ENCODE measurements at regions of chr13 and their contacts with region 1.

Region 1: DNA sequence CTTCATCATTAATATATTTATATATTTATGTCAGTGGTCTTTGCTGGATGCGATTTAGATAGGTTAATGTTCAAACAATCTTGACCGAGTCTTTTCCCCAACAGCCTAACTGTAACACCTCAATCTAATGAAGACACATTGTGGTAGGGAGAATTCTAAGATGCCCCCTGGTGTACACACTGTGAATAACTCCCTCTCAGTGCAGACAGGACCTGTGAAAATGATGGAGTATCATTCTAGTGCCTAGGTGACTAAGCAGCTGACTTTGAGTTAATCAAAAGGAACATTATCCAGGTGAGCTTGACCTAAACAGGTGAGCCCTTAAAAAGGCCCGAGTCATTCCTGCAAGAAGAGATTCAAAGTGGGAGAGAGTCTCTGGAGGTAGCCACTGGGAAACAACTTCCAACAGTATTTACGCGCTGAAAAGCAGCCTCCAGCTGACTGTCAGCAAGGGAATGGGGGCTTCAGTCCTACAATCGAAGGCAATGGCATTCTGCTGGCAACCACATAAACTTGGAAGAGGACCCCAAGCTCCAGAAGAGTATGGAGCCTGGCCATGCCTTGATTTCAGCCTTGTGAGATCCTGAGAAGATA is 28.0 kb upstream of the KBTBD7 start:
- DNase-seq: peak in 2 of 4 donors; percentile 7 to 43
- ATAC-seq: peak; percentile 97
- H3K4me3 ChIP-seq: no peak overlapping the region
- H3K27ac ChIP-seq: peak overlapping the region in 1 of 2 donors; percentile 51
- H3K4me1 ChIP-seq: no peaks in the 10 kb centered on the region
- H3K27me3 ChIP-seq: no peaks in the 10 kb centered on the region
- CTCF ChIP-seq: peak; percentile 74 to 79

Region 2: DNA sequence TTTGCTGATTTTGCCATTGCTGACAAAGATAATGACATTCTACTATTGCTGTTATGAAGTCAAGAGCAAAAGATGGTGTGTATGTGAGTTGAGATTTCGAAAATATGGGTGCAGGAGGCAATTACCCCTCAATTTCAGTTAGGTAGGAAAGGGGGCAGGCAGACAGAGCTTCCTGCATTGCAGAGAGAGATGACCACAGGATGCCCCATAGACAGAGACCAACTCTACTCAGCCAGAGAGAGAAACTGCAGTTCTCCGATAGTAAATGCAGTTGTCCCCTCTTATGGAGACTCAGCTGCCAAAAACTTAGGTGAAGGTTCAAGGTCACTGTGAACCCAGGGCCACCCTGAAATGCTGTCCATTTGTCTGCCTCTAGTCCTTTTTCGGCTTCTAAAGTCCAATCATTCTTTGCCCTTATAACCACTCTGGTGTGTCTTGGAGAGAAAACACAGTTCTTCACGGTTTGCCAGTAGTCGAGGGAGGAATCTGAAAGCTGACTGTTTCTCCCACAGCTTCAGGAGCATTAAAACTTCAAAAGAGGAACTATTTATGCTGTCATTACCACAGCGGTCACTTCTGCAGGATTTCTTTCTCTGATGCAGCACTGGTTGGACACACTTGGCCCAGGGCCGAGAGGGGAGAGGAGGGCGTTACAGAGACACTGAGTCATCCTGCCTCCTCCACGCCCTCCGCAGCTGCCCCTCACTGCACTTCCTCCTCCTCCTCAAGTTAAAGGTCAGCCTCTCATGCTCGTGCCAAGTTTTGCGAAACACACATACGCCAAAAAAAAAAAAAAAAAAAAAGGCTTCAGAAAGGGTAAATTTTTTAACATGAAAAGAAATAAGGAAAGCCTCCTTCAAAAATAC is 820.2 kb before region 1 on chr13:
- intact Hi-C with region 1: no loop called
- DNase-seq: peak; percentile 75 to 97 (median 92)
- ATAC-seq: peak; percentile 97
- H3K4me3 ChIP-seq: no peak overlapping the region
- H3K27ac ChIP-seq: peak overlapping the region; percentile 58 to 82
- H3K4me1 ChIP-seq: peaks cover 21 to 55% of the 10 kb centered on the region in 2 donors
- H3K27me3 ChIP-seq: no peaks in the 10 kb centered on the region
- CTCF ChIP-seq: no peak

Region 3: GRCh38 chr13:41075034-41075433 is 147.3 kb before region 1 on chr13:
- intact Hi-C with region 1: loop called in 1 of 2 experiments (anchors 5 kb)
- DNase-seq: peak in 1 of 4 donors; percentile 55
- ATAC-seq: peak; percentile 65
- H3K4me3 ChIP-seq: no peak overlapping the region
- H3K27ac ChIP-seq: no peak overlapping the region
- H3K4me1 ChIP-seq: no peaks in the 10 kb centered on the region
- H3K27me3 ChIP-seq: no peaks in the 10 kb centered on the region
- CTCF ChIP-seq: peak; percentile 28 to 50

Measured in left lung (tissue), 14 donors.